CD14-positive monocyte (primary cell): ENCODE measurements at regions of chr5 and their contacts with region 1.

Region 1: GRCh38 chr5:149680810-149681221 is 49.3 kb upstream of the PPARGC1B start:
- DNase-seq: peak; percentile 94
- H3K4me3 ChIP-seq: peak overlapping the region in 1 of 3 experiments; percentile 61
- H3K4me3 Mint-ChIP-seq: peak overlapping the region; percentile 61 to 63
- H3K27ac ChIP-seq: peak overlapping the region; percentile 68 to 87
- H3K27ac Mint-ChIP-seq: peak overlapping the region; percentile 95 to 99 (median 97)
- H3K4me1 ChIP-seq: peaks cover 90 to 94% of the 10 kb centered on the region in 2 donors
- H3K4me1 Mint-ChIP-seq: peaks cover 98% of the 10 kb centered on the region
- H3K27me3 ChIP-seq: no peaks in the 10 kb centered on the region
- H3K27me3 Mint-ChIP-seq: peaks cover 0 to 1% (median 0%) of the 10 kb centered on the region in 3 donors
- CTCF ChIP-seq: no peak

Region 2: GRCh38 chr5:149514512-149514911 is 166.3 kb before region 1 on chr5:
- intact Hi-C with region 1: no loop called
- DNase-seq: no peak
- H3K4me3 ChIP-seq: no peak overlapping the region
- H3K4me3 Mint-ChIP-seq: no peak overlapping the region
- H3K27ac ChIP-seq: peak overlapping the region in 1 of 2 donors; percentile 1
- H3K27ac Mint-ChIP-seq: peak overlapping the region in 1 of 7 donors; percentile 50
- H3K4me1 ChIP-seq: no peaks in the 10 kb centered on the region
- H3K4me1 Mint-ChIP-seq: peaks cover 7% of the 10 kb centered on the region
- H3K27me3 ChIP-seq: no peaks in the 10 kb centered on the region
- H3K27me3 Mint-ChIP-seq: no peaks in the 10 kb centered on the region
- CTCF ChIP-seq: no peak

Region 3: GRCh38 chr5:149667084-149667828 is 13.6 kb before region 1 on chr5:
- intact Hi-C with region 1: loop called in 1 of 2 experiments (anchors 2 kb)
- DNase-seq: peak; percentile 36 to 60 (median 51)
- H3K4me3 ChIP-seq: peak overlapping the region in 1 of 3 experiments; percentile 22
- H3K4me3 Mint-ChIP-seq: no peak overlapping the region
- H3K27ac ChIP-seq: peak overlapping the region; percentile 25 to 65
- H3K27ac Mint-ChIP-seq: peak overlapping the region; percentile 52 to 90 (median 87)
- H3K4me1 ChIP-seq: peaks cover 37 to 38% of the 10 kb centered on the region in 2 donors
- H3K4me1 Mint-ChIP-seq: peaks cover 45% of the 10 kb centered on the region
- H3K27me3 ChIP-seq: no peaks in the 10 kb centered on the region
- H3K27me3 Mint-ChIP-seq: peaks cover 0 to 3% (median under 1%) of the 10 kb centered on the region in 3 donors
- CTCF ChIP-seq: peak; percentile 96

Region 4: DNA sequence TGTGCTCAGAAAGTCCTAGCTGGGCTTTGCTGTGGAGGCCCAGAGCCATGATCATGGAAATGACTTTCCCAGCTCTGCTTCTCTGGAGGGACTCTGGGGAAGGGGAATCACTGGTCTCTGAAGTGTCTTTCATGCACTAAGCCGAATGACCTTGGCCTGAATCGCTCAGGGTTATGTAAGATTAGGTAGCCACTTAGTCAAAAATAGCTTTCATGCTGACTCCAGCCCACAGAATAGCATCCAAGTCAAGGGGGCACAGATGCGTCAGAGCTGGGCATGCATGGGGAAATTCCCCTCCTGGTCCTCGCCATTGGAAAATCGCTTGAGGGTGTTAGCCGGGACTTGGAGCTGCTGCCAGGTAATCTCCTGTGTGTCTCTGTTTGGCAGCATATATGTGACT is 13.2 kb after region 1 on chr5:
- intact Hi-C with region 1: loop called in 1 of 2 experiments (anchors 1 kb)
- DNase-seq: no peak
- H3K4me3 ChIP-seq: no peak overlapping the region
- H3K4me3 Mint-ChIP-seq: no peak overlapping the region
- H3K27ac ChIP-seq: no peak overlapping the region
- H3K27ac Mint-ChIP-seq: no peak overlapping the region
- H3K4me1 ChIP-seq: peaks cover under 1 to 16% of the 10 kb centered on the region in 2 donors
- H3K4me1 Mint-ChIP-seq: peaks cover 29% of the 10 kb centered on the region
- H3K27me3 ChIP-seq: no peaks in the 10 kb centered on the region
- H3K27me3 Mint-ChIP-seq: peaks cover 1 to 8% (median 2%) of the 10 kb centered on the region in 3 donors
- CTCF ChIP-seq: no peak

Region 5: DNA sequence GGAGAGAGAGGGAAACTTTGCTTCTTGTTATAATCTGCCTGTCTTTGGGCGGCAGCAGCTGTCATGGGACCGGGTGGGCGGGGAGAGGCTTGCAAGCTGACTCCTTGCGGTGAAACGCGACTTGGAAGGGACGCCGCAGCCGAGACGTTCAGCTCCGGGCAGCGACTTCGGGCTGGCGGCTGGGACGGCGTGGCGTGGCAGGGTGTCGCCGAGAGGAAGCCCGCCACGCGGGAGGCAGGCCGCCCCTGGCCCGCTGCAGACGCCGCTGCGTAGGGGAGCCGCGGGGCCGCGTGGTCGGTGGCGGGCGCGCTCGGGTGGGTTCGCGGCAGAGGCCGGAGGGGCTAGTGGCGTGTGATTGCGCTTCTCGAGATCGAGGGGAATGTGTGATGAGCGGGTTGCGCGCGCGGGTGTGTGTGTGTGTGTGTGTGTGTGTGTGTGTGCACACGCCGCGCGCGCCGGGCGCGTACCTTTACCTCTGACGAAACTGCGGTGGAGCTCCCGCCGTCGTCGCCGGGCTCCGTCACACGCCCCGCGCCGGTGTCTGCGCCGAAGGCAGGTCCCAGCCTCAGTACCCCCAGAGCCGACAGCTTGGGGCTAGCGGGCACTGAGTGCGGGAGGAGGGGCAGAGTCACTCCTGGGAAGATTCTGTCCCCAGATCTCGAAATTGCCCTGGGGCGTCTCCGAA is 51.0 kb after region 1 on chr5:
- intact Hi-C with region 1: loop called in 1 of 2 experiments (anchors 5 kb)
- DNase-seq: peak; percentile 56 to 81 (median 73)
- H3K4me3 ChIP-seq: peak overlapping the region; percentile 82 to 99 (median 95)
- H3K4me3 Mint-ChIP-seq: peak overlapping the region; percentile 88 to 91
- H3K27ac ChIP-seq: peak overlapping the region; percentile 67 to 84
- H3K27ac Mint-ChIP-seq: peak overlapping the region; percentile 69 to 89 (median 84)
- H3K4me1 ChIP-seq: peaks cover 40 to 45% of the 10 kb centered on the region in 2 donors
- H3K4me1 Mint-ChIP-seq: peaks cover 50% of the 10 kb centered on the region
- H3K27me3 ChIP-seq: no peaks in the 10 kb centered on the region
- H3K27me3 Mint-ChIP-seq: no peaks in the 10 kb centered on the region
- CTCF ChIP-seq: no peak

Region 6: DNA sequence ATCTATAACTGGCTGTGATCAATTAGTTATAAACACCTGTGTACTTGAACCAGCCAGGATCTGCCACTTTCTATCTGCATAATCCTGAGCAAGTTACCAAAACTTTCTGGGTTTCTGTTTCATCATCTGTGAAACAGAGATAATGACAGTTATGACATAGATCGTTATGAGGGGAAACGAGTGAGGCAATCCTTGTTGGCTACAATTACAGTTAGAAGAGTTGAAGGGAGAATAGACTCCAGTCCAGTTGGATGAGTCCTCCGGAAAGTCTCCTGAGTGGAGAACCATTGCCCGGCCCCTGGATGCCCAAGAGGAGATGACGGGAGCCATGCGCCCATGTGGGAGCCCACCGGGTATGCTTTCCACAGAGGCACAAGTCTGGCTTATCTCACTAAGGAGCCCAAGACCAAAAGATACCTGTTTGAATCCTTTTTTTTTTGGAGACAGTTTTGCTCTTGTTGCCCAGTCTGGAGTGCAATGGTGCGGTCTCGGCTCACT is 259.3 kb after region 1 on chr5:
- intact Hi-C with region 1: loop called in 1 of 2 experiments (anchors 10 kb)
- DNase-seq: peak; percentile 71 to 90 (median 88)
- H3K4me3 ChIP-seq: peak overlapping the region in 1 of 3 experiments; percentile 33
- H3K4me3 Mint-ChIP-seq: peak overlapping the region; percentile 14 to 70
- H3K27ac ChIP-seq: peak overlapping the region; percentile 25 to 92
- H3K27ac Mint-ChIP-seq: peak overlapping the region; percentile 94 to 98 (median 96)
- H3K4me1 ChIP-seq: peaks cover 45 to 46% of the 10 kb centered on the region in 2 donors
- H3K4me1 Mint-ChIP-seq: peaks cover 62% of the 10 kb centered on the region
- H3K27me3 ChIP-seq: no peaks in the 10 kb centered on the region
- H3K27me3 Mint-ChIP-seq: peaks cover 0 to 3% (median 0%) of the 10 kb centered on the region in 3 donors
- CTCF ChIP-seq: no peak